ENCODE measurements at regions of chr10 and their contacts with region 1.

Region 1: GRCh38 chr10:73940634-73941221 is 29.8 kb downstream of the PLAU start:
- DNase-seq: peak; percentile 61 to 89 (median 79)
- ATAC-seq: peak; percentile 99
- H3K4me3 ChIP-seq: no peak overlapping the region
- H3K4me3 Mint-ChIP-seq: peak overlapping the region in 7 of 10 donors; percentile 0 to 51 (median 42)
- H3K27ac ChIP-seq: no peak overlapping the region
- H3K27ac Mint-ChIP-seq: peak overlapping the region in 2 of 9 donors; percentile 71 to 80
- H3K4me1 ChIP-seq: peaks cover 0 to 6% of the 10 kb centered on the region in 2 donors
- H3K4me1 Mint-ChIP-seq: peaks cover 0 to 17% (median 7%) of the 10 kb centered on the region in 7 donors
- H3K27me3 ChIP-seq: no peaks in the 10 kb centered on the region
- H3K27me3 Mint-ChIP-seq: peaks cover 0 to 24% (median 0%) of the 10 kb centered on the region in 5 donors

Region 2: GRCh38 chr10:73159038-73159648 is 781.6 kb before region 1 on chr10:
- CTCF ChIA-PET with region 1: no interaction called
- POLR2A ChIA-PET with region 1: no interaction called
- intact Hi-C with region 1: no loop called
- DNase-seq: peak in 8 of 9 donors; percentile 33 to 67 (median 58)
- ATAC-seq: peak; percentile 86
- H3K4me3 ChIP-seq: no peak overlapping the region
- H3K4me3 Mint-ChIP-seq: peak overlapping the region in 1 of 10 donors; percentile 16
- H3K27ac ChIP-seq: no peak overlapping the region
- H3K27ac Mint-ChIP-seq: peak overlapping the region in 3 of 9 donors; percentile 22 to 74 (median 42)
- H3K4me1 ChIP-seq: peaks cover 9 to 10% of the 10 kb centered on the region in 2 donors
- H3K4me1 Mint-ChIP-seq: peaks cover 27 to 44% (median 39%) of the 10 kb centered on the region in 7 donors
- H3K27me3 ChIP-seq: no peaks in the 10 kb centered on the region
- H3K27me3 Mint-ChIP-seq: no peaks in the 10 kb centered on the region

Region 3: DNA sequence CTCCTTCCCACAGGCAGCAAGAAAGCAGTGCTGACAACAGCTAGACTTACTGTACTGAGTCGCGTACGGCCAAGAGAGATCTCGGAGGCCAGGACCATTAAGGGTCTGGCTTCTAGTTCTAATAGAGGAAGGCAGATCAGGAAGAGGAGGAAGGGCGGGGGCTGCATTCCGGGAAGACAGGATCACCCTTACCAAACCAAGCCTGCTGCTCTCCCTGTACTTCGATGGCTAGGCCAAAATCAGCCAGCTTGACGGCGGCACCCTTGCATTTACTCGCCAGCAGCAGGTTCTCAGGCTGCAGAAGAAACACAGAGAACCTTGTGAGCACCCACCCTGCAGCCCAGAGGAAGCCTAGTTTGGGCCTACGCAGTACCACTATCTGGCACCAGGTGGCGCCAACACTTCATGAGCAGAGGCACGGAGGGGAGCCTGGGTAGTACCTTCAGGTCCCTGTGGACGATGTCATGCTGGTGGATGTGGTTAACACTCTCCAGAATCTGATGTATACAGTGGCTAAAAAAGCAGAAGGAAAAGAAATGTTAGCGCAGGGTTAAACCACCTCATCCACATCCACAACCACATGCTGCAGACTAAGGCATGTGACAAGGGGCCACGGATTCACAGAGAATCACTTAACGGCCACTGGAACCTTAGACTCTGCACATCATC is 91.8 kb before region 1 on chr10:
- CTCF ChIA-PET with region 1: interaction called, 12 read pairs
- POLR2A ChIA-PET with region 1: no interaction called
- intact Hi-C with region 1: loop called (anchors 1 kb)
- DNase-seq: peak; percentile 82 to 93 (median 88)
- ATAC-seq: peak; percentile 100
- H3K4me3 ChIP-seq: no peak overlapping the region
- H3K4me3 Mint-ChIP-seq: peak overlapping the region in 5 of 10 donors; percentile 1 to 58 (median 37)
- H3K27ac ChIP-seq: peak overlapping the region; percentile 56
- H3K27ac Mint-ChIP-seq: peak overlapping the region; percentile 75 to 97 (median 94)
- H3K4me1 ChIP-seq: peaks cover 6 to 7% of the 10 kb centered on the region in 2 donors
- H3K4me1 Mint-ChIP-seq: peaks cover 11 to 23% (median 16%) of the 10 kb centered on the region in 7 donors
- H3K27me3 ChIP-seq: no peaks in the 10 kb centered on the region
- H3K27me3 Mint-ChIP-seq: no peaks in the 10 kb centered on the region

Region 4: DNA sequence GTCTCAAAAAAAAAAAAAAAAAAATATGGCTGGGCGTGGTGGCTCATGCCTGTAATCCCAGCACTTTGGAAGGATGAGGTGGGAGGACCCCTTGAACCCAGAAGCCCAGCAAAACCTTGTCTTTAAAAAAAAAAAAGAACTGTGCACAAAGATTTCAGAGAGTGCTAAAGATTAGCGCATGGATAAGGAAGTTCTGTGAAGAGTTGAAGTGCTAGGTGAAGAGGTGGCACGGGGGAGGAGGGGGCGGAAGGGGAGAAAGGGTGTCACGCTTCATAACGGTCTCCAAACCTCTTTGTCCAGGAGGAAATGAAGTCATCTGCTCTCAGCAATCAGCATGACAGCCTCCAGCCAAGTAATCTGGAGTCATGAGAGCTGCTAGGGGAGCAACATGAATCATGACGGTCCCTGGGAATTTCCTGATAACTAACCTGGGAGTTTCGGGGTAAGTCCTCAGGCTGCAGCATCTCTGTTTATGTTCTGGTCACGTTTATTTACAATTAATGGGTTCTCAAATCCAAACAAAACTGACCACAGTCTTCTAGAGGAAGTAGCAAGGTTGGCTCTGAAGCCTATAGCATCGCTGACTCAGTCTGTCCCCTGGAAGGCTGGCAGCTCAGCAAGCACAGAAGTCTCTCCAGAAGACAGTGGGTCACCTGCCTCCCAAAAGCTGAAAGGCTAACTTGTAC is 31.7 kb before region 1 on chr10:
- CTCF ChIA-PET with region 1: interaction called, 3 read pairs
- POLR2A ChIA-PET with region 1: no interaction called
- intact Hi-C with region 1: loop called in 1 of 2 experiments (anchors 1 kb)
- DNase-seq: peak in 3 of 9 donors; percentile 20 to 59 (median 21)
- ATAC-seq: peak; percentile 68
- H3K4me3 ChIP-seq: no peak overlapping the region
- H3K4me3 Mint-ChIP-seq: peak overlapping the region in 7 of 10 donors; percentile 7 to 69 (median 37)
- H3K27ac ChIP-seq: no peak overlapping the region
- H3K27ac Mint-ChIP-seq: peak overlapping the region in 1 of 9 donors; percentile 14
- H3K4me1 ChIP-seq: peaks cover 14 to 15% of the 10 kb centered on the region in 2 donors
- H3K4me1 Mint-ChIP-seq: peaks cover 15 to 46% (median 30%) of the 10 kb centered on the region in 7 donors
- H3K27me3 ChIP-seq: peaks cover 10 to 21% of the 10 kb centered on the region in 2 donors
- H3K27me3 Mint-ChIP-seq: peaks cover 49 to 70% (median 61%) of the 10 kb centered on the region in 5 donors

Region 5: DNA sequence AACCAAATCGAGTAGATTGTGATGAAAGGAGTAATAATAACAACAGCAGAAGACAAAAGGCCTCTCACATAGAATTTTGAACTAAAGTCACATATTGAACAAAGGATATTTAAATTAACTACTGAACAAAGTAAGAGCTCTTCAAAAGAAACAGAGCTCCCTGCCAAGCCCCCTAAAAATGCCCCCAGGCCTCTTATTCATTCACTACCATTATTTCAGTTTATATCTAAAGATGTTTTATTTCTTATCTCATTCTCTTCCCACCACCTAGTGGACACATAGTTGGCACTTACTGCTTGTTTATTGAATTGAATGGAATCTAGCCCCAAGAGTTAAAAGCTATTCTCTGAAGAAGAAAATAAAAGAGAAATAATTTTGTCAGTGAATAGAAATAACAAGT is 94.6 kb after region 1 on chr10:
- CTCF ChIA-PET with region 1: interaction called, 10 read pairs
- POLR2A ChIA-PET with region 1: no interaction called
- intact Hi-C with region 1: loop called in 1 of 2 experiments (anchors 1 kb)
- DNase-seq: peak in 4 of 9 donors; percentile 7 to 19 (median 10)
- ATAC-seq: no peak
- H3K4me3 ChIP-seq: no peak overlapping the region
- H3K4me3 Mint-ChIP-seq: no peak overlapping the region
- H3K27ac ChIP-seq: no peak overlapping the region
- H3K27ac Mint-ChIP-seq: peak overlapping the region in 8 of 9 donors; percentile 13 to 74 (median 34)
- H3K4me1 ChIP-seq: peaks cover 0 to 5% of the 10 kb centered on the region in 2 donors
- H3K4me1 Mint-ChIP-seq: peaks cover 22 to 52% (median 45%) of the 10 kb centered on the region in 7 donors
- H3K27me3 ChIP-seq: no peaks in the 10 kb centered on the region
- H3K27me3 Mint-ChIP-seq: no peaks in the 10 kb centered on the region

Region 6: DNA sequence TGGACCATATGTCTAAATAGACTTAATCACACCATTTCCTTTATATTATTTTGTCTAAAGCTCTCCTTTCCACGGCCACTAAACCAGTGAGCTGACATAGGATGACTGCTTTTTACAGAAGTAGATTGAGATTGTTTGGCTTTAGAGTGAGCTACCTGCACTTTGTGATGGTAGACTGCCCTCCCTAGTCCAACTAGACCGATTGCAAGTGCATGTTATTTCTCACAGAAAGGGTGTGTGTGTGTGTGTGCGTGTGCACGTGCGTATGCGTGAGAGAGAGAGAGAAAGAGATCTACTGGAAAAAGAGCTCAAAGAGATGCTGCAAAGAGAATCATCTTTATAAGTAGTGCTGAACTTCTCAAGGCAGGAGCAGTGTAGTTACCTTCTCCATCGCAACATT is 117.9 kb after region 1 on chr10:
- CTCF ChIA-PET with region 1: no interaction called
- POLR2A ChIA-PET with region 1: no interaction called
- intact Hi-C with region 1: loop called in 1 of 2 experiments (anchors 5 kb)
- DNase-seq: peak in 7 of 9 donors; percentile 12 to 60 (median 29)
- ATAC-seq: peak; percentile 70
- H3K4me3 ChIP-seq: no peak overlapping the region
- H3K4me3 Mint-ChIP-seq: peak overlapping the region in 7 of 10 donors; percentile 1 to 76 (median 8)
- H3K27ac ChIP-seq: no peak overlapping the region
- H3K27ac Mint-ChIP-seq: peak overlapping the region in 5 of 9 donors; percentile 4 to 52 (median 12)
- H3K4me1 ChIP-seq: peaks cover 10 to 15% of the 10 kb centered on the region in 2 donors
- H3K4me1 Mint-ChIP-seq: peaks cover 18 to 44% (median 26%) of the 10 kb centered on the region in 7 donors
- H3K27me3 ChIP-seq: no peaks in the 10 kb centered on the region
- H3K27me3 Mint-ChIP-seq: no peaks in the 10 kb centered on the region

Region 7: GRCh38 chr10:74081192-74081803 is 140.6 kb after region 1 on chr10:
- CTCF ChIA-PET with region 1: interaction called, 6 read pairs
- POLR2A ChIA-PET with region 1: no interaction called
- intact Hi-C with region 1: loop called in 1 of 2 experiments (anchors 1 kb)
- DNase-seq: peak in 7 of 9 donors; percentile 14 to 51 (median 41)
- ATAC-seq: peak; percentile 71
- H3K4me3 ChIP-seq: no peak overlapping the region
- H3K4me3 Mint-ChIP-seq: no peak overlapping the region
- H3K27ac ChIP-seq: no peak overlapping the region
- H3K27ac Mint-ChIP-seq: no peak overlapping the region
- H3K4me1 ChIP-seq: peaks cover 0 to 15% of the 10 kb centered on the region in 2 donors
- H3K4me1 Mint-ChIP-seq: peaks cover 0 to 40% (median 6%) of the 10 kb centered on the region in 7 donors
- H3K27me3 ChIP-seq: no peaks in the 10 kb centered on the region
- H3K27me3 Mint-ChIP-seq: no peaks in the 10 kb centered on the region